Posterior cingulate gyrus (tissue), 11 donors: ENCODE measurements at regions of chr20 and their contacts with region 1.

Region 1: GRCh38 chr20:44521484-44522481 is at the start of gene SERINC3:
- DNase-seq: peak; percentile 92 to 99 (median 96)

Region 2: GRCh38 chr20:44475694-44476560 is 45.9 kb before region 1 on chr20 and contains the start of gene TTPAL:
- intact Hi-C with region 1: loop called (anchors 5 kb)
- DNase-seq: peak; percentile 78 to 98 (median 86)

Region 3: GRCh38 chr20:44720617-44720993 is 198.8 kb after region 1 on chr20:
- intact Hi-C with region 1: loop called (anchors 5 kb)
- DNase-seq: peak in 6 of 10 donors; percentile 37 to 91 (median 40)

Region 4: DNA sequence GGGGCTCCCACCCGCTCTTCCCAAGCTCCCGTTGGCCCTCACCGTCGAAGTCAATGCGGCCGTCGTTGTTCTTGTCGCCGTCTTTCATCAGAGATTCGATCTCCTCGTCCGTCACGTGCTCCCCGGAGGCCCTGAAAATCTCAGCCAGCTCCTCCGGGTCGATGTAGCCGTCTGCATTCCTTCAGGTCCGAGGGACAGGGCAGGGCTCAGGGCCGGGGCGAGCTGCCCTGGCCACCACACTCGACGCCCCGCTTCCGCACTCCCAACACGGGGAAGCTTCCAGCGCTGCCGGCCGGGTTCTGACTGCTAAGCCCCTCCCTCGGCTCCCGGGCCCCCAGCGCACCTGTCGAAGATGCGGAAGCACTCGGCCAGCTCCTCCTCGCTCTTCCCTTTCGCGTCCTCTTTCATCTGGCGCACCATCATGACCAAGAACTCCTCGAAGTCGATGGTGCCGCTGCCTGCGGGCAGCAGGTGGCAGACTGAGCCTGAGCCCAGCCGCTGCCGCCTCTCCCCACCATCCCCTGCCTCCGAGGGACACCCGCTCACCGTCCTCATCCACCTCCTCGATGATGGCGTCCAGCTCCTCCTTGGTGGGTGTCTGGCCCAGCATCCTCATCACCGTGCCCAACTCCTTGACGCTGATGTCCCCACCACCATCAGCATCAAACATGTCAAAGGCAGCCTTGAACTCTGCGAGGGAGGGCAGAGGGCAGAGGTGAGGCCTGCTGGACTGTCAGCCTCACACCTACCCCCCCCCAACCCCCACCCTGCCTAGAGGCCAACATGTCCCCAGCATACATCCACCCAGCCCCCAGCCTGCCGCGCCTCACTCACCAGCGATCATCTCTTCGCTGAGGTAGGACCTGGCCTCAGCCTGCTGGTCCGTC is 1302.4 kb after region 1 on chr20:
- intact Hi-C with region 1: no loop called
- DNase-seq: peak in 5 of 10 donors; percentile 26 to 90 (median 52)